ENCODE measurements at regions of chr20 and their contacts with region 1.

Region 1: GRCh38 chr20:32945710-32946221 is 58.5 kb downstream of the SUN5 start:
- DNase-seq: no peak
- ATAC-seq: peak; percentile 92
- H3K4me3 Mint-ChIP-seq: no peak overlapping the region
- H3K27ac Mint-ChIP-seq: no peak overlapping the region
- H3K4me1 Mint-ChIP-seq: peaks cover 6% of the 10 kb centered on the region
- H3K27me3 Mint-ChIP-seq: peaks cover 52% of the 10 kb centered on the region
- CTCF ChIP-seq: peak; percentile 32; the same call in 1 of the 2 replicates

Region 2: DNA sequence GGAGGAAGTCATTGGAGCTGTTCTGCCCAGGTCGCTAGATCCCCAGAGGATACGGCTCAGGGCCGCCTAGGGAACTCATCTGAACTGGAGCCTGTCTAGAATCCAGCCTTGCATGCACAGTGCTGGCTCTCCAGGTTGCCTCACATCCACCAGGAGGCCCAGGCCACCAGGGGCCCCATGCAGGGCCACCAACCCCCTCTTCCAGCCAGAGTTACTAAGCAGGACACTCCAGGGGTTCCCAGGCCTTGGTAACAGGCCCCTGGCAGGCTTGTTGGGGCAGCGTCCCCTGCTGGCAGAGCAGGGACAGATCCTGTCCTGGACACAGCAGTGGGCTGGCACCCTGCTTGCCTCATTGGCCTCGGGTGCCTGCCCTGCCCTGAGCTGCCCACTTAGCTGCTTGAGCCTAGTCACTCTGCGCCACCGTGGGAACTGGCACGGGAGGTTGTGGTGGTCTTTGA is 51.7 kb before region 1 on chr20:
- CTCF ChIA-PET with region 1: interaction called, 10 read pairs
- POLR2A ChIA-PET with region 1: no interaction called
- DNase-seq: peak; percentile 83
- ATAC-seq: peak; percentile 88
- H3K4me3 Mint-ChIP-seq: no peak overlapping the region
- H3K27ac Mint-ChIP-seq: no peak overlapping the region
- H3K4me1 Mint-ChIP-seq: peaks cover 5% of the 10 kb centered on the region
- H3K27me3 Mint-ChIP-seq: no peaks in the 10 kb centered on the region
- CTCF ChIP-seq: peak; percentile 82

Region 3: DNA sequence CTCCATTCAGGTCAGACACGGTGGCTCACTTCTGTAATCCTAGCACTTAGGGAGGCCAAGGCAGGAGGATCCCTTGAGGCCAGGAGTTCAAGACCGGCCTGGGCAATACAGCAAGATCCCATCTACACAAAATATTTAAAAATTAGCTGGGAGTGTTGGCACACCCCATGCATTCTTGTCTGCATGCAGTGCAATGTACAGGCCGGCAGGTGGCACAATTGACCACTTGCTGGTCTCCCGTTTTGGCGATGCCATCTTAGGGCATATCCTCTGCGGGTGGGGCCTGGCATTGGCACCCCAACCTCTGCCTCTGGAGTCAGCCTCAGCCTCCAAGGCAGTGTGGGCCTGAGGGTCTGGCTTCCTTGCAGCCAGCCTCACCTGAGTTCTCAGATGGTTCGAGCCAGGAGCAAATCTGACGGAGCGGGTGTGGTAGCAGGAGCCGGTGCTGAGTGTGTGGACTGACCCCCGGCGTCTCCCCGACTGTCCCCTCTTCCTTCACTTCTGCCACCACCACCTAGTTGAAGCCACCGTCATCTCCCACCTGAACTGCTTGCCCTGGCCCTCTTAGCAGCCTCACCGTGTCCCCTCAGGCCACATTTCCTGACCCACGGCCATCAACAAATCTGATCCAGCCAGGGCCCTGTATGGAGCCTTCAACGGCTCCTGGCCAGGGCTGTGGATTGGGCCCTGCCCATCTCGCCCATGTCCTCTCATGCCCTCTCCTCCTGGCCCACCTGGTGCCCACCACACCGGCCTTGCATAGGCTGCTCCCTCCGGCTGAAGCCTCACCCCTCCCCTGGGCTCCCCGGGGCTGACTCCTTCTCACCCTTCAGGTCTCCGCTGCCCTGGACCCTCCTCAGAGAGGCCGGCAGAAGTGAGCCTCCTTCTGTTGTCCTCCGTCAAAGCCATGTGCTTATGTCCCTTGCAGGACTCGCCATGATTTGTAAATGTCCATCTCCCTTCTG is 43.0 kb before region 1 on chr20:
- CTCF ChIA-PET with region 1: interaction called, 10 read pairs
- POLR2A ChIA-PET with region 1: no interaction called
- DNase-seq: peak; percentile 60
- ATAC-seq: peak; percentile 78
- H3K4me3 Mint-ChIP-seq: no peak overlapping the region
- H3K27ac Mint-ChIP-seq: no peak overlapping the region
- H3K4me1 Mint-ChIP-seq: no peaks in the 10 kb centered on the region
- H3K27me3 Mint-ChIP-seq: no peaks in the 10 kb centered on the region
- CTCF ChIP-seq: peak; percentile 89

Region 4: GRCh38 chr20:32920530-32921298 is 25.1 kb before region 1 on chr20:
- CTCF ChIA-PET with region 1: interaction called, 14 read pairs
- POLR2A ChIA-PET with region 1: no interaction called
- DNase-seq: no peak
- ATAC-seq: no peak
- H3K4me3 Mint-ChIP-seq: no peak overlapping the region
- H3K27ac Mint-ChIP-seq: no peak overlapping the region
- H3K4me1 Mint-ChIP-seq: no peaks in the 10 kb centered on the region
- H3K27me3 Mint-ChIP-seq: no peaks in the 10 kb centered on the region; the same call in 1 of the 2 replicates
- CTCF ChIP-seq: no peak

Region 5: GRCh38 chr20:32930181-32930580 is 15.6 kb before region 1 on chr20:
- CTCF ChIA-PET with region 1: interaction called, 11 read pairs
- POLR2A ChIA-PET with region 1: interaction called, 5 read pairs
- DNase-seq: no peak
- ATAC-seq: no peak
- H3K4me3 Mint-ChIP-seq: no peak overlapping the region
- H3K27ac Mint-ChIP-seq: no peak overlapping the region
- H3K4me1 Mint-ChIP-seq: no peaks in the 10 kb centered on the region
- H3K27me3 Mint-ChIP-seq: no peaks in the 10 kb centered on the region; the same call in 1 of the 2 replicates
- CTCF ChIP-seq: no peak

Region 6: GRCh38 chr20:33686100-33686983 is 740.6 kb after region 1 on chr20 and contains the start of gene E2F1:
- CTCF ChIA-PET with region 1: no interaction called
- POLR2A ChIA-PET with region 1: no interaction called
- DNase-seq: peak; percentile 98
- ATAC-seq: peak; percentile 91
- H3K4me3 Mint-ChIP-seq: peak within 1 kb of the TSS; percentile 81
- H3K27ac Mint-ChIP-seq: peak within 1 kb of the TSS; percentile 85
- H3K4me1 Mint-ChIP-seq: peaks cover 25% of the 10 kb centered on the region
- H3K27me3 Mint-ChIP-seq: peaks cover 30% of the 10 kb centered on the region
- CTCF ChIP-seq: no peak
- total RNA-seq, gene E2F1: 34.2 to 44.2 TPM (median 34.5 TPM) in 3 replicates